Sigmoid colon (tissue), 7 donors: ENCODE measurements at regions of chr14 and their contacts with region 1.

Region 1: DNA sequence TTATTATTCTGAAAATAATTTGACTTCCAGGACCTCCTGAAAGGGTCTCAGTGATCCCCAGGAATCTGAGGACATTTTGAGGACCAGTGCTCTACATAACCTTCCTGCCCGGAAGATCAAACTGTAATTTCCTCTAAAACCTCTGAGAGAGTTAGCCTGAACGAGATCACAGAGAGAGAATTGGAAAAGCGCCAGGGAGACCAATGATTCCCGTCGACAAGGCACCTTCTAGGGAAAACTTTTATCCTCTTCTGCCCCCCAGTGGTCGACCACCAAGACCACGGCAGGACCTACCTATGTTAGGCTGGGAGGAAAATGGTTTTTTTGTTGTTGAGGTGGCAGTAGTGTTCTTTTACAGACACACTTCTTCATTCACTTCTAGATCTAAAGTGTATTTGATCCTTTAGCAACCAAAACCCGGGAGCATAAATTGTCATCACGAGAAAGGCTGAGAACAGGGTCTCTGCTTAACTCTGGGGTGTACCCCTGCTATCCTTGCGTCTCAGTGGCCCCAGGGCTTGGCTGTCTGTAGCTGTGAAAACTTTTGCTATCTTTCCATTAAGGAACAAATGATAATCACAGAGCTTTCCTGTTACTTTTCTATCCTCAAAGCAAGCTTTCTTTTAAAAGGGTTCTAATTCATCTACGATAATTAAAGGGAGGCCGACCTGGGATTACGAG is 62.9 kb upstream of the NID2 start:
- DNase-seq: peak; percentile 93
- H3K4me3 ChIP-seq: no peak overlapping the region
- H3K27ac ChIP-seq: peak overlapping the region in 1 of 4 donors; percentile 34
- H3K4me1 ChIP-seq: peaks cover 0 to 27% (median 15%) of the 10 kb centered on the region in 4 donors
- H3K27me3 ChIP-seq: no peaks in the 10 kb centered on the region
- CTCF ChIP-seq: peak; percentile 51 to 74 (median 66)
- EP300 ChIP-seq: no peak
- POLR2A ChIP-seq: no peak

Region 2: DNA sequence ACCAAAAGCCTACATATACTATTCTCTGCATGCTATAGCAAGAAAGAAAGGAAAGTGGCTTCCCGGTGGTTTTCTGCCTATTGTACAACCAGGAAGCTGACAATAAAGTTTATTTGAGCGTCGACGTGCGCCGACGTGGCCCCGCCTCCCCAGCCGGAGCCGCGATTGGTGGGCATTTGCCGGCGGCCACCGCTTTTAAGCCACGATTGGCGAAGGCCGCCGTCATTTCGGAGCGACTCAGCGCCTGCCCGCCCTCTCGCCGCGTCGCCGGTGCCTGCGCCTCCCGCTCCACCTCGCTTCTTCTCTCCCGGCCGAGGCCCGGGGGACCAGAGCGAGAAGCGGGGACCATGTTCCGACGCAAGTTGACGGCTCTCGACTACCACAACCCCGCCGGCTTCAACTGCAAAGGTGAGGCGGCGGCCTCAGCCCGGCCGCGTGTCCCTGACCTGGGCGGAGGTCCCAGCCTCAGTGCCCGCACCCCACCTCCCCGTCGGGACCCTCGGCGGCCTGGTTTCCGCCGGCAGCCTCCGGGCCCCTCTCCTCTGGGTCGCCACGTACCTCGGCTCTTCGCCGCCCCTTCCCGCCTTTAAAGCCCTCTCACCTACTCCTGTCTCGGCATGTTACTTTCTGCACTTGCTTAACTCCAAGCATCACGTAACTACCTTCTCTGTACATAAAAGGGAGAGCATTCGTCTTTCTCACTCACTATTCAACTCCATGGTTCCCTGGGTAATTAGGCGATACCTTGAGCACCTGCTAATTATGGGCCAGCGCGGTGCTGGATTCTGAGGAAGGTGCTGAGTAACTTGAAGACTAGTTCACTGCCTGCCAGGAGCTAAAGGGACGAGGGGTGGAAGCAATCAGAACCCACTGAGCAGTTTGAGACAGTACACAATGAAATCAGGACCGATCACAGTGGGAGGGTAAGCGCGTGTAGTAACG is 142.2 kb before region 1 on chr14 and contains the start of gene RTRAF:
- intact Hi-C with region 1: loop called (anchors 2 kb)
- DNase-seq: peak; percentile 97
- H3K4me3 ChIP-seq: peak within 1 kb of the TSS; percentile 90 to 98 (median 94)
- H3K27ac ChIP-seq: peak within 1 kb of the TSS; percentile 91 to 94 (median 92)
- H3K4me1 ChIP-seq: peaks cover 0 to 39% (median 19%) of the 10 kb centered on the region in 4 donors
- H3K27me3 ChIP-seq: no peaks in the 10 kb centered on the region
- CTCF ChIP-seq: no peak
- EP300 ChIP-seq: no peak
- POLR2A ChIP-seq: peak; percentile 80 to 82
- total RNA-seq, gene RTRAF: 33.5 to 76.0 (median 53.7) TPM

Region 3: GRCh38 chr14:51996148-51996746 is 135.5 kb before region 1 on chr14:
- intact Hi-C with region 1: loop called (anchors 1 kb)
- DNase-seq: no peak
- H3K4me3 ChIP-seq: no peak overlapping the region
- H3K27ac ChIP-seq: no peak overlapping the region
- H3K4me1 ChIP-seq: peaks cover 0 to 51% (median 10%) of the 10 kb centered on the region in 4 donors
- H3K27me3 ChIP-seq: no peaks in the 10 kb centered on the region
- CTCF ChIP-seq: peak; percentile 59 to 78 (median 64)
- EP300 ChIP-seq: no peak
- POLR2A ChIP-seq: no peak

Region 4: GRCh38 chr14:52068615-52069303 is 63.0 kb before region 1 on chr14 and contains the start of gene NID2:
- intact Hi-C with region 1: loop called (anchors 2 kb)
- DNase-seq: peak; percentile 97
- H3K4me3 ChIP-seq: peak within 1 kb of the TSS; percentile 53 to 89 (median 84)
- H3K27ac ChIP-seq: peak within 1 kb of the TSS; percentile 89 to 93 (median 92)
- H3K4me1 ChIP-seq: peaks cover 0 to 36% (median 27%) of the 10 kb centered on the region in 4 donors
- H3K27me3 ChIP-seq: no peaks in the 10 kb centered on the region
- CTCF ChIP-seq: peak in 1 of 4 experiments; percentile 11
- EP300 ChIP-seq: no peak
- POLR2A ChIP-seq: peak; percentile 44 to 46
- total RNA-seq, gene NID2: 26.4 to 52.9 (median 29.9) TPM